Head of caudate nucleus (tissue), 42 donors: ENCODE measurements at regions of chr18 and their contacts with region 1.

Region 1: DNA sequence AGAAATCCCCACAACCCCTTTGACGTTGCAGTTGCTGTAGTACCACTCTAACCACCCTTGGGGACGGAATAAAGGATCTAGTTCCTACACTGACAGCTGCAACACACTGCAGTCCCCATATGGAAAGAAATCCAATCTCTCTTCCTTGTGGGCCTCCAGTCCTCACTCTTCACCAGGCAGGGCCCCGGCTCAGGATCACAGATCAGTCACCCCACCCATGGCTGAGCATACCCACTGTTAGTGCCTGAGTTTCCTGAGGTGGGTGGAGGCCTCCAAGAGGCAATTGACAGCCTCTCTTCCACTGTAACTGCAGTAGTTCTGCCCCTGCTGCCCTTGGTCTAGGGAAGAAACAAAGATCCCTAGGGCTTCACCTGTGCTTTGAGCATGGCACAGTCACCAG is 670.0 kb upstream of the CDH2 start:
- DNase-seq: no peak

Region 2: DNA sequence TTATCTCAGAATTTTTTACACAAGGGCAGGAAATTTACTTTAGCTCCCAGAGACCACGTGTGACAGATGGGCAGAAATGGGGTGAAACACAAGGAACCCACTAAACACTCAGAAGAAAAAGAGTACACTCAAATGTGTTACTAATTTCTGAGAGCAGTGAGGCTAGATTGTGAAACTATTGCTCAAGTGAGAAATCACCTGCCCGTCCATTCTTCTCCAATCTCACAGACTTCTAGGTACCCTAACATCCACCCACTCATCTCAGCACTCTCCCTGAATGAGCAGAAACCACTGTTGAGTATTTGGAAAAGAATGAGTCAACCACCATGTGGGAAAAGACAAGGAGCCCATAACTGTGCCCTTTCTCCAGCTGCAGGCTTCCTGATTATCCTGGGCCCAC is 377.0 kb before region 1 on chr18:
- intact Hi-C with region 1: loop called (anchors 10 kb)
- DNase-seq: no peak

Region 3: DNA sequence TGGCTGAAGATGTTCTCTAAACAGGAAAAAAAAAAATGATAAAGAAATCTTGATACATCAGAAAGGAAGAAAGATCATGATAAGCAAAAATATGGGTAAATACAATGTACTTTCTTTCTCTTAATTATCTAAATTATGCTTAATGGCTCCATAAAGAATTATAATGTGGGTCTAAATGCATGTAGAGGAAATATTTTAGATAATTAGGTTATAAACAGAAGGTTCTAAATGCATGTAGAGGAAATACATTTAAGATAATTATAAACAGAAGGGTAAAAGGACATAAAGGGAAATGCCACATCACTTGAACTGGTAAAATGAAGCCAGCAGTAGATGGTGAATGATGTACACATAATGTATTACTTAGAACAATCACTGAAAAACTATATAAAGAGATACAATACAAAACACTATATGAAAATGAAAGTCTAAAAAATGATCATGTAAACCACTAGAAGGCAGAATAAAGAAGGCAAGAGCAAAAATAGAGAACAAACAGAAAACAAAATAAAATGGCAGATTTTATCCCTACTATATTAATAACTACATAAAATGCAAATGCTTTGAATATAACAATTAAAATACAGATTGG is 361.7 kb before region 1 on chr18:
- intact Hi-C with region 1: no loop called
- DNase-seq: no peak

Region 4: GRCh38 chr18:28584731-28585130 is 262.2 kb before region 1 on chr18:
- intact Hi-C with region 1: no loop called
- DNase-seq: no peak

Region 5: DNA sequence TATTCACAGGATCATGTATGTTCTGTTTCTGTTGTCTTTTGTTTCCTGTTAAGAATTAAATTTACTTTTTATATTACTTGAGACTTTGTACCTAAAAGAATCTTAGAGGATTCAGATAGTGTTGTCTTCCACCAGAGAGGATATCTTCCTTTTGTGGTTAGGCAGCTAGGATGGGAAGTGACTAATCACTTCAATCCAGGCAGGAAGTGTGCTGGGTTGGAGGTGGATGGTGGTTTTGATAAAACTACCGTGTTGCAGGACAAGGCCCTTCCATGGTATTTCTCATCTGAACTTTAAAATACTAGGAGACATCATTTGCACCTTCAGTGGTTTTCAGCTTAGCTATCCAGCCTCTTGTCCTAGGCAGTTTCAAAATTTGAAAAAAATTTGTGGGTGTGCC is 58.6 kb after region 1 on chr18:
- intact Hi-C with region 1: loop called (anchors 10 kb)
- DNase-seq: no peak